Activated CD8-positive, alpha-beta T cell treated with anti-CD3 and anti-CD28 coated beads, Interleukin-2, amount 10 ng/mL, durations not matched to agents 7 days and 5 days (primary cell): ENCODE measurements at regions of chr5 and their contacts with region 1.

Region 1: DNA sequence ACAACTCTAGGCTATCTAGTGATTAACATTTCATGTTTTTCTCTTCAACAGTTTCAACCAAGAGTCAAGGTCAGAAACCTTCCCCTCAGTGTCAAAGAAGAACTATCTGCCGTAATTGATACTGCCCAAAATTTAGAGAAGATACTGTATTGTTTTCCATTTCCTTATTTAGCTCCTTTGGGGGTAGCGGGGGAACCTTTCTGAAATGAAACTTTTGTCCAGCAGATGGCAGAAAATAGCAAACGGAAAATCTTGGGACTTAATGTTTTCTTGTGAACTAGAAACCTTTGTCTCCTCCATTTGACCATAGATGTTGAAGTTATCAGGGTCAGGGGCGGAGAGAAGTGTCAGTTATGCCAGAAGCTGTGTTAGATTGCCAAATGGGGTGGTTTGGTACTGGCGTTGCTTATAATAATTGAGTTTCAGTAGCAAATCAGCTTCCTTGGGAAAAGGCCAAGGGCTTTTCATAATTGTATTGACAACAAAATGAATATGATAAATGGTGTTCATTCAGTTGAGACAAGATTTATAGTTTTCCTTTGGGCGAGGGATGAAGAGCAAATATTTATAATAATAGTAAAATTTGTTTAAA is 101.7 kb upstream of the TLX3 start:
- DNase-seq: peak; percentile 56
- ATAC-seq: peak; percentile 60
- H3K4me3 Mint-ChIP-seq: no peak overlapping the region
- H3K27ac Mint-ChIP-seq: no peak overlapping the region
- H3K4me1 Mint-ChIP-seq: no peaks in the 10 kb centered on the region
- H3K27me3 Mint-ChIP-seq: peaks cover 24% of the 10 kb centered on the region

Region 2: DNA sequence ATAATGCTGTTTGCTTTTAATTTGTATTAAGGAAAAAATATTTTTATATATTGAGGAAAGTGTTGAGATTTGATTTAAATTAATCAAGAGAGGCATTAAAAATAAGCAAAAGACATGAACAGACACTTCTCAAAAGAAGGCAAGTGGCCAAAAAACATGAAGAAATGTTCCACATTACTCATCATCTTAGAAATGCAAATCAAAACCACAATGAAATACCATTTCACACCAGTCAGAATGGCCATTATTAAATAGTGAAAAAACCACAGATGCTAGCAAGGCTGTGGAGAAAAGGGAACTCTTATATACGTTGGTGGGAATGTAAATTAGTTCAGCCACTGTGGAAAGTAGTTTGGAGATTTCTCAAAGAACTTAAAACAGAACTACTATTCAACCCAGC is 299.6 kb before region 1 on chr5:
- CTCF ChIA-PET with region 1: no interaction called
- POLR2A ChIA-PET with region 1: no interaction called
- DNase-seq: no peak
- ATAC-seq: no peak
- H3K4me3 Mint-ChIP-seq: no peak overlapping the region
- H3K27ac Mint-ChIP-seq: no peak overlapping the region
- H3K4me1 Mint-ChIP-seq: no peaks in the 10 kb centered on the region
- H3K27me3 Mint-ChIP-seq: no peaks in the 10 kb centered on the region

Region 3: GRCh38 chr5:171080186-171080938 is 127.0 kb before region 1 on chr5:
- CTCF ChIA-PET with region 1: no interaction called
- POLR2A ChIA-PET with region 1: no interaction called
- DNase-seq: no peak
- ATAC-seq: no peak
- H3K4me3 Mint-ChIP-seq: no peak overlapping the region
- H3K27ac Mint-ChIP-seq: no peak overlapping the region
- H3K4me1 Mint-ChIP-seq: no peaks in the 10 kb centered on the region
- H3K27me3 Mint-ChIP-seq: no peaks in the 10 kb centered on the region

Region 4: DNA sequence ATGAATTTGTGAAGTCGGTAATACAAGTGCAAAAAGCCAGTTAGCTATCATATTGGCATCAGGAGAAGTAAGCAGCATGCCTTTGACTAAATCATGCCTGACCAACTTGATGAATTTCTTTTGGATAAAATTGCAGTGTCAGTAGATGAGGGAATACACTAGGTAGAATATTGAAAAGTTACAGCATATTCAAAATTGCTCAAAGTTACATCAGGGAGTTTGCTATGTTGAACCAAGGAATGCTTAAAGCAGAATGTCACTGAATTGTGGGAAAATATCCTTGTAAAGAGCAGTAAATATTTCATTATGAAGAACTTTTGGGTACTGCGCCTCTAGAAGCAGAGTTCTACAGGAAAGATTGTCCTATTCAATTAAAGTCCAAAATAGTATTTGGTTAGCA is 14.6 kb after region 1 on chr5:
- CTCF ChIA-PET with region 1: interaction called, 17 read pairs
- POLR2A ChIA-PET with region 1: no interaction called
- DNase-seq: no peak
- ATAC-seq: no peak
- H3K4me3 Mint-ChIP-seq: no peak overlapping the region
- H3K27ac Mint-ChIP-seq: no peak overlapping the region
- H3K4me1 Mint-ChIP-seq: peaks cover 20% of the 10 kb centered on the region
- H3K27me3 Mint-ChIP-seq: peaks cover 49% of the 10 kb centered on the region

Region 5: GRCh38 chr5:171272996-171273970 is 65.9 kb after region 1 on chr5:
- CTCF ChIA-PET with region 1: interaction called, 12 read pairs
- POLR2A ChIA-PET with region 1: no interaction called
- DNase-seq: peak; percentile 37
- ATAC-seq: no peak
- H3K4me3 Mint-ChIP-seq: no peak overlapping the region
- H3K27ac Mint-ChIP-seq: no peak overlapping the region
- H3K4me1 Mint-ChIP-seq: peaks cover 13% of the 10 kb centered on the region
- H3K27me3 Mint-ChIP-seq: peaks cover 21% of the 10 kb centered on the region

Region 6: GRCh38 chr5:171336521-171337209 is 129.3 kb after region 1 on chr5:
- CTCF ChIA-PET with region 1: interaction called, 76 read pairs
- POLR2A ChIA-PET with region 1: no interaction called
- DNase-seq: peak; percentile 54
- ATAC-seq: peak; percentile 74
- H3K4me3 Mint-ChIP-seq: peak overlapping the region; percentile 60
- H3K27ac Mint-ChIP-seq: no peak overlapping the region
- H3K4me1 Mint-ChIP-seq: peaks cover 8% of the 10 kb centered on the region
- H3K27me3 Mint-ChIP-seq: peaks cover 35% of the 10 kb centered on the region

Region 7: DNA sequence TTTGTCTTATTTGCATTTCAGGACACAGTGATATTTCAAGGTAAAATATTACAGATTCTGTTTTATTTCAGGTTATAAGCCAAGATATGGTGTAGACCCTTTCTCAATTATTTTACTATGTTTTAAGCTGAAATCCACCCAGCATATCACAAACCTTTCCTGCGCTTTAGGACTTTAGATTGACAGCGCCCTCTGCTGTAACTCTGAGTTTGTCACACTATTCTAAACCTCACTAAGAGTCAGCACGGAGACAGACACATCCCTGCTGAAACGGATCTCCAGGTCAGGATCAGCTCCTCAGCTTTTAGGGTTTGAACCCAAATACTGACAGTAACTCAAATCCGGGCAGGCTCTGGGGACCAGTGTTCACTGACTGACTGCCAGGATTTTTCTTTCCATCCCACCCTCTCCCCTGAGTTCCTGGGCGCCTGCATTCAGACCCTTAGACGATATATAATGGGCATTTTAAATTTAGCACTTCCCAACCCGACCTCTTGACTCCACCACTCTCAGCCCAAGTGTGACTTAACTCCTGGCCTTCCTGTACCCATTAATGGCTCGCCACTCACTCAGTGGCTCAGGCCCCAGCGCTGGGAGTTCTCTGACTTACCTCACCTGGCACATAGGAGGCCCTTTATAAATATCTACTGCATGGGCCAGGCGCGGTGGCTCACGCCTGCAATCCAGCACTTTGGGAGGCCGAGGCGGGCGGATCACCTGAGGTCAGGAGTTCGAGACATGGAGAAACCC is 135.2 kb after region 1 on chr5:
- CTCF ChIA-PET with region 1: interaction called, 76 read pairs
- POLR2A ChIA-PET with region 1: no interaction called
- DNase-seq: peak; percentile 68
- ATAC-seq: peak; percentile 71
- H3K4me3 Mint-ChIP-seq: no peak overlapping the region
- H3K27ac Mint-ChIP-seq: no peak overlapping the region
- H3K4me1 Mint-ChIP-seq: no peaks in the 10 kb centered on the region
- H3K27me3 Mint-ChIP-seq: peaks cover 11% of the 10 kb centered on the region